MCF 10A (cell line): ENCODE measurements at regions of chr1 and their contacts with region 1.

Region 1: GRCh38 chr1:209692745-209693504 is 11.7 kb upstream of the HSD11B1 start:
- DNase-seq: peak; percentile 98
- H3K4me3 Mint-ChIP-seq: no peak overlapping the region
- H3K27ac Mint-ChIP-seq: peak overlapping the region; percentile 55
- H3K4me1 Mint-ChIP-seq: peaks cover 64% of the 10 kb centered on the region
- H3K27me3 Mint-ChIP-seq: peaks cover 17% of the 10 kb centered on the region
- CTCF ChIP-seq: peak; percentile 100

Region 2: DNA sequence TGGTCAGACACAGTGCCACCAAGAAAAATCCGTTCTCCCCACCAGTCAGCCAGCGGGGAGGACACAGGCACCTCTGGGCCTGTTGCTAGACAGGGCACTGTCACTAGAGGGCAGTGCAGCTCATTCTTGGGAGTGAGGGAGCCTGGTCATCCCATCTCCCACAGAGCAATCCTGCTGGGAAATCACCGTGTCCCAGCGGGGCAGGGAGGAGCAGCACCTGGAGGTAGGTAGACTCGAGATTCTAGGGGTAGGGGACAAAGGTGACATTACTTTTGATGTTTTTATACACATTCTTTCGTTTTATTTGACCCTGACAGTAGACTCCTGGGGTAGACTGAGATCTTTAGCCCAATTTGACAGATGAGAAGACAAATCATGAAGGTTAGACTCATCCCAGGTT is 116.1 kb before region 1 on chr1:
- CTCF ChIA-PET with region 1: interaction called, 169 read pairs
- POLR2A ChIA-PET with region 1: interaction called, 6 read pairs
- intact Hi-C with region 1: loop called (anchors 1 kb)
- DNase-seq: peak; percentile 97
- H3K4me3 Mint-ChIP-seq: no peak overlapping the region
- H3K27ac Mint-ChIP-seq: no peak overlapping the region
- H3K4me1 Mint-ChIP-seq: peaks cover 8% of the 10 kb centered on the region
- H3K27me3 Mint-ChIP-seq: peaks cover 19% of the 10 kb centered on the region
- CTCF ChIP-seq: peak; percentile 100

Region 3: DNA sequence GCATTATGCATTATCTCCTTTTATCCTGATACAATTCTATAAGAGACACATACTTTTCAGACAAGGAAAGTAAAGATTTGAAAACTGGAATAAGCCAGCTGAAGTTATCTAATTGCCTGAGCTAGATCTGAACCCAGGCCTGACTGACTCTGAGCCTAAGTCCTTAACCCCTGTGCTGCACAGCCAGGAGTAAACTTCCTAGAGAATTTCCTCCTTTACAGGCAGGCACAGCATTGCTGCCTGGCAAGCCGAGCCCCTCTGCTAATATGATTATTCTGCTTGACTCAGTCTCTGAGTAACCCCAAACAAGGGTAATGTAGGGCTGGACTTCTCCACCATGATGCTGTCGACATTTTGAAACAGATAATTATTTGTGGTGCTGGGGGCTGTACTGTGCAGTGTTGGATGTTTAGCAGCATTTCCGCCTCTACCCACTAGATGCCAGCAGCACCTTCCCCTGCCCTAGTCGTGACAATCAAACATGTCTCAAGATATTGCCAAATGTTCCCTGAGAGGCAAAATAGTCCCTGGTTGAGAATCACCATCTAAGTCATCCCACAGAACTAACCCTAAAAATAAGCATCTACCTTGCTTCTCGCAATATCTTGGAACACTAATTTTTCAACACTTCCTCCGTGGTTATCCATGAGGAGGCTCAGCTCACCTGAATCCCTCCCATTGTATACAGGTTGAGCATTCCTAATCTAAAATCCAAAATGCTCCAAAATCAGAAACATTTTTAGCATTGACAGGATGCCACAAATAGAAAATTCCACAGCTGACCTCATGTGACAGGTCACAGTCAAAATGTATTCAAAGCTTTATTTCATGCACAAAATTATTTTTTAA is 90.9 kb before region 1 on chr1:
- CTCF ChIA-PET with region 1: interaction called, 403 read pairs
- POLR2A ChIA-PET with region 1: interaction called, 69 read pairs
- intact Hi-C with region 1: loop called (anchors 1 kb)
- DNase-seq: peak; percentile 90
- H3K4me3 Mint-ChIP-seq: no peak overlapping the region
- H3K27ac Mint-ChIP-seq: no peak overlapping the region
- H3K4me1 Mint-ChIP-seq: no peaks in the 10 kb centered on the region
- H3K27me3 Mint-ChIP-seq: no peaks in the 10 kb centered on the region
- CTCF ChIP-seq: peak; percentile 92

Region 4: GRCh38 chr1:209627732-209628196 is 65.2 kb before region 1 on chr1:
- CTCF ChIA-PET with region 1: interaction called, 25 read pairs
- POLR2A ChIA-PET with region 1: interaction called, 4 read pairs
- intact Hi-C with region 1: no loop called
- DNase-seq: peak; percentile 84
- H3K4me3 Mint-ChIP-seq: no peak overlapping the region
- H3K27ac Mint-ChIP-seq: peak overlapping the region; percentile 11
- H3K4me1 Mint-ChIP-seq: peaks cover 40% of the 10 kb centered on the region
- H3K27me3 Mint-ChIP-seq: no peaks in the 10 kb centered on the region
- CTCF ChIP-seq: peak; percentile 99

Region 5: GRCh38 chr1:209643285-209644020 is 49.5 kb before region 1 on chr1:
- CTCF ChIA-PET with region 1: interaction called, 564 read pairs
- POLR2A ChIA-PET with region 1: interaction called, 458 read pairs
- intact Hi-C with region 1: loop called (anchors 1 kb)
- DNase-seq: peak; percentile 61
- H3K4me3 Mint-ChIP-seq: peak overlapping the region; percentile 24
- H3K27ac Mint-ChIP-seq: peak overlapping the region; percentile 68
- H3K4me1 Mint-ChIP-seq: peaks cover 69% of the 10 kb centered on the region
- H3K27me3 Mint-ChIP-seq: no peaks in the 10 kb centered on the region
- CTCF ChIP-seq: no peak

Region 6: GRCh38 chr1:209674957-209675564 is 17.9 kb before region 1 on chr1 and contains the start of gene G0S2:
- CTCF ChIA-PET with region 1: interaction called, 38 read pairs
- POLR2A ChIA-PET with region 1: interaction called, 56 read pairs
- intact Hi-C with region 1: no loop called
- DNase-seq: no peak
- H3K4me3 Mint-ChIP-seq: no peak within 1 kb of the TSS
- H3K27ac Mint-ChIP-seq: peak within 1 kb of the TSS; percentile 66
- H3K4me1 Mint-ChIP-seq: peaks cover 36% of the 10 kb centered on the region
- H3K27me3 Mint-ChIP-seq: no peaks in the 10 kb centered on the region
- CTCF ChIP-seq: no peak
- total RNA-seq, gene G0S2: not detected in 2 replicates

Region 7: DNA sequence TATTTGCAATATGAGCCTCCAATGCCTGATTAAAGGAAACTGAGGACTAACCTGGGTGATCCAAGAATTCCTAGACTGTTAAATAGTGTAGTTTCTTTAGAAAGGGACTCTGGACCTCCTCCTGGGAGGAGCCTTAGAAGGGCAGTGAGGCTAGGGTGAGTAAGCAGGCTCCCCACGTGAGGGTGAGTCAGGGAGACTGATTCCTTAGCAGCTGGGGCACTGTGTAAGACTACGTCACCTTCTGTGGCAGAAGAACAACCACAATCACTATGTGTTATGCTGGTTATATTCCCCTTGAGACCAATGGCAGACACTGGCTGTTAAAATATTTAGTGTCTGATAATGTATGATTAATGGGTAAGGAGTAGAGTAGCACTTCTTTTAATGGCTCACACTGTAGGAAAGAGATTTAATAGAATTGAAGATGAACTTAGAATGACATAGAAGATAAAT is 191.8 kb after region 1 on chr1:
- CTCF ChIA-PET with region 1: no interaction called
- POLR2A ChIA-PET with region 1: no interaction called
- intact Hi-C with region 1: no loop called
- DNase-seq: peak; percentile 99
- H3K4me3 Mint-ChIP-seq: peak overlapping the region; percentile 0
- H3K27ac Mint-ChIP-seq: peak overlapping the region; percentile 81
- H3K4me1 Mint-ChIP-seq: peaks cover 70% of the 10 kb centered on the region
- H3K27me3 Mint-ChIP-seq: no peaks in the 10 kb centered on the region
- CTCF ChIP-seq: no peak

Region 8: DNA sequence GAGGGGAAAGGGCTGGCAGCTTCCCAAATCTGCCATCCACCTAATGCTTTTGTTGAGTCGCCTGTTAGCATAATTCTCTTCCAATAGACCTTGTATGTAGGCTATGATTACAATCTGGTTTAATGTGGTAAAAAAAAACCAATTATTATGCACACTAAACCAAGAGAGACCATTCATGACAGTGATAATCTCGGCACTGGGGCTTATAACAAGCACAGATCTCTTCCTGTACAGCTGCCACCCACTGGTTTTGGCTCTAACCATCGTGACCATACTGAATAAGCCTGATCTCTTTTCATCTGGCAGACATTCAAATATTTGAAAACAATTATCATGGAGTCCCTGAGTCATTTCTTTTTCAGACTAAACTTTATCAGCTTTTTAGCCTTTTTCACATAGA is 233.1 kb after region 1 on chr1:
- CTCF ChIA-PET with region 1: no interaction called
- POLR2A ChIA-PET with region 1: no interaction called
- intact Hi-C with region 1: no loop called
- DNase-seq: peak; percentile 74
- H3K4me3 Mint-ChIP-seq: no peak overlapping the region
- H3K27ac Mint-ChIP-seq: no peak overlapping the region
- H3K4me1 Mint-ChIP-seq: peaks cover 14% of the 10 kb centered on the region
- H3K27me3 Mint-ChIP-seq: no peaks in the 10 kb centered on the region
- CTCF ChIP-seq: no peak